ENCODE measurements at regions of chr7 and their contacts with region 1.

Region 1: DNA sequence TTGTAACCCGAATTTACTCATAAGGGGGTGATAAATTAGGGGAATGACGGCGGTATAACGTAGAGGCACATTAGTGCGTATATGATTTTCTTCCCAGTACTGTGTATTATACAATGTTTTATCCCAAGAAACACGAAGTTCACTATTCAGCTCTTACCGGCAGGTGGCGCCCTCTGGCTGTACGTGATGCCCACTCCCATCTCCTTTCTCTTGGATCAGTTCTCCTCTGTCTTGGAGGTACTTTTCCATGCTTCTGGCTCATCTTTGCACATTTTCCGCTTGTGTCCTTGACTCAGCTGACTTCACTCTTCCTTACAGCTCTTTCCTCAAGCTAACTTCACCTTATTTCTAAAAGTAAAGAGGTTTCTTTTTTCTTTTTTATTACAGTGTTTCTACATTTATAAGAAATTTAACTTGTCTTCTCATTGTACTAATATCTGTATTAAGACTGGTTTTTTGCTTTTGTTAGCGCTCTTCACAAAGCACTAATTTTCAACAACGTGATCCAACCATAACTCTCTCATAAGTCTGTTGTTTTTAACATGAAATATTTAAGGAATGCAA is 21.3 kb downstream of the TMEM176B start:
- DNase-seq: peak; percentile 81 to 92 (median 91)
- H3K4me3 ChIP-seq: no peak overlapping the region
- H3K27ac ChIP-seq: no peak overlapping the region
- H3K4me1 ChIP-seq: no peaks in the 10 kb centered on the region
- H3K27me3 ChIP-seq: no peaks in the 10 kb centered on the region
- CTCF ChIP-seq: peak; percentile 70 to 87 (median 86)
- EP300 ChIP-seq: no peak
- POLR2A ChIP-seq: no peak

Region 2: DNA sequence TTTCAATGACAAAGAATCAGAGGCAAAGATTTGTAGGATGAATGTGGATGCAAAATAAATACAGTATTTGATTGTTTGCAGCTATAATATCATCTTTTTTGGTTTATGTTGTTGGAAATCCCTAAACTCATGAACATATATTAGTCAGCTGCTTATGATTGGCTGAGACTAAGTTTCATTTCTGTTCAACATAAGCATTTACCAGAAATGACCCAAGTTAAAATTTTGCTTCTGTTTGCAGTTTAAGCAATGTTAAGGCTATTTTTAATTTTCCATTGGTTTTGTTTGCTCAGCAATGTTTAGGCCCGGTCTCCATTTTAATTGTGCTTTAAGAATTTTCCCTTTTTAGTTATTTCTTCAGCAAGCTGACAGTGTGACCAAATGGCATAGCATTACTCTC is 168.6 kb before region 1 on chr7:
- intact Hi-C with region 1: no loop called
- DNase-seq: no peak
- H3K4me3 ChIP-seq: no peak overlapping the region
- H3K27ac ChIP-seq: no peak overlapping the region
- H3K4me1 ChIP-seq: no peaks in the 10 kb centered on the region
- H3K27me3 ChIP-seq: no peaks in the 10 kb centered on the region
- CTCF ChIP-seq: no peak
- EP300 ChIP-seq: no peak
- POLR2A ChIP-seq: no peak

Region 3: DNA sequence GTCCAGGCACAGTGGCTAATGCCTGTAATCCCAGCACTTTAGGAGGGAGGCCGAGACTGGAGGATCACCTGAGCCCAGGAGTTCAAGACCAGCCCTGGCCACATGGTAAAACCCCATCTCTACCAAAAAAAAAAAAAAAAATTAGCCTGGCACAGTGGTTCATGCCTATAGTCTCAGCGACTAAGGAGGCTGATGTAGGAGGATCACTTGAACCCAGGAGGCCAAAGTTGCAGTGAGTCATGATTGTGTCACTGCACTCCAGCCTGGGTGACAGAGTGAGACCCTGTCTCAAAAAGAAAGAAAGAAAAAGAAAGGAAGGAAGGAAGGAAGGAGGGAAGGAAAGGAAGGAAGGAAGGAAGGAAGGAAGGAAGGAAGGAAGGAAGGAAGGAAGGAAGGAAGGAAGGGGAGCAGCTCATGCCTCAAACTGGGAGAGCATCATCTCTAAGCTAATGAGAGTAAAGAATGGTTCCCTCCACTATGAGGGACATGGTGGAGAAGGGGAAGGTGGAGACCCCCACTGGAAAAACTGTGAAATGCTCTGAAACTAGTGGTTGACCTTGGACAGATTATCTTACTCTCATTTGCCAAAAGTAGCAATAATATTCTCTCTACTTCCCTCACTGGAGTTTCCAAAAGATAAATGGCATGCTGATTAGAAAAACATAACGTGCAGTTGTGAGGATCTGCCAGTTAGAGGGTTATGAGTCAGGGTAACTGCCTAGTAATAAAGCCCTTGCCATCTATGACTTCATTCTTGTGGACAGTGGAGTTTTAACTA is 24.8 kb before region 1 on chr7:
- intact Hi-C with region 1: no loop called
- DNase-seq: no peak
- H3K4me3 ChIP-seq: no peak overlapping the region
- H3K27ac ChIP-seq: no peak overlapping the region
- H3K4me1 ChIP-seq: peaks cover 2% of the 10 kb centered on the region
- H3K27me3 ChIP-seq: no peaks in the 10 kb centered on the region
- CTCF ChIP-seq: no peak
- EP300 ChIP-seq: no peak
- POLR2A ChIP-seq: no peak

Region 4: GRCh38 chr7:150860291-150860977 is 81.6 kb after region 1 on chr7:
- intact Hi-C with region 1: loop called in 1 of 4 experiments (anchors 5 kb)
- DNase-seq: peak in 1 of 5 donors; percentile 8
- H3K4me3 ChIP-seq: no peak overlapping the region
- H3K27ac ChIP-seq: no peak overlapping the region
- H3K4me1 ChIP-seq: no peaks in the 10 kb centered on the region
- H3K27me3 ChIP-seq: no peaks in the 10 kb centered on the region
- CTCF ChIP-seq: peak in 1 of 3 donors; percentile 20
- EP300 ChIP-seq: no peak
- POLR2A ChIP-seq: no peak

Region 5: DNA sequence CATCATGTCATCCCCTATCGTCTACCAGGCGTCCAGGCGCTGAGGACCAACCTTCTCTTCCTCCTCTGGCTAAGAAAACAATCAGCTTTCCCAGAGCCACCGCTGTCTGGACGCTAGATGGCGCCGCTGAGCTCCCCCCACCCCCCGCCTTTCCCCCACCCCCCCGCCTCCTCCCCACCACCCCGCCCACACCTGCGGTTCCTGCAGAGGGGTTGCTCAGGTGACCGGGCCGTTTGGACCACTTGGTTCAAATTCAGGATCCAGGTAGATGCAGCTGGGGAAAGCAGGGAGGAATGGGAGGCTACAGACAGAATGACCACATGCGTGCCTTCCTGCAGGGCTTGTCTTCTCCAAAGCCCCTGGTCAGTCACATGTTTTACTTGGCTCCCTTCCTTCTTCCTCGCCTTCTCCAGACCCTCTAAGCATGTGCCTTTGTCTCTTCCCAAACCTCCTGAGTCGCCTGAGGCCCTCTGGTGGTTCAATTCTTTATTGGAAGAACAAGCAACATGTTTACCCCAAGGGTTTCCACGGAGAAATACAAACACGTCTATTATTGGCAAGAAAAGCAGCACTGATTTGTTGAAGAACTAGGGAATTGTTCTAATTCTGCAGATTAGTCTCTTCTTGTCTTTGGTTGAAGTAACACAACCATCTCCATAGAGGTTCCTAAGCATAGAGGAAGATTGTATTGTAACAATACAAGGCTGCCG is 98.2 kb after region 1 on chr7:
- intact Hi-C with region 1: loop called in 2 of 4 experiments (anchors 2 to 10 kb)
- DNase-seq: peak; percentile 59 to 81 (median 72)
- H3K4me3 ChIP-seq: no peak overlapping the region
- H3K27ac ChIP-seq: no peak overlapping the region
- H3K4me1 ChIP-seq: peaks cover 6% of the 10 kb centered on the region
- H3K27me3 ChIP-seq: no peaks in the 10 kb centered on the region
- CTCF ChIP-seq: peak; percentile 8 to 75 (median 63)
- EP300 ChIP-seq: no peak
- POLR2A ChIP-seq: no peak

Region 6: DNA sequence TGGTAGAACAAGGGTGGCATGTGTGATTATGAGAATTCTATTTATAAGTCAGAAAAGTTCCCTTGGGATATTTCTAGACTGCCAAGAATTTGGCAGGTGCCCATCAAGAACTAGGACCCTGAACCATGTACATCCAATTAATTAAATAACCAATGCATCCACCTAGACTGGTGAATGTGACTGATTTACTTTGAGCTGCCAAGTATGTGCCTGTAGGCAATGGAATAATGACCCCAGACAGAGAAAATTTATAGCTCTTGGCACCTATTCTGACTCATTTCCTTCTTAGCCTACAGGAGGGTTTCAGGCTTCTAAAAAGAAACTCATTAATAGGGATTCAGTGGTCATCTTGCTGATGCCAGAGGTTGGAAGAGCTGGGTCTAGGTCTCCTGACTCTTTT is 144.4 kb after region 1 on chr7:
- intact Hi-C with region 1: no loop called
- DNase-seq: no peak
- H3K4me3 ChIP-seq: no peak overlapping the region
- H3K27ac ChIP-seq: no peak overlapping the region
- H3K4me1 ChIP-seq: no peaks in the 10 kb centered on the region
- H3K27me3 ChIP-seq: no peaks in the 10 kb centered on the region
- CTCF ChIP-seq: no peak
- EP300 ChIP-seq: no peak
- POLR2A ChIP-seq: no peak